Upper lobe of right lung (tissue), 1 donor: ENCODE measurements at regions of chr3 and their contacts with region 1.

Region 1: GRCh38 chr3:185983495-185984141 is 45.8 kb upstream of the TRA2B start:
- DNase-seq: peak; percentile 71
- ATAC-seq: peak; percentile 97
- H3K4me3 ChIP-seq: no peak overlapping the region
- H3K27ac ChIP-seq: no peak overlapping the region
- H3K4me1 ChIP-seq: peaks cover 4% of the 10 kb centered on the region
- H3K27me3 ChIP-seq: peaks cover 5% of the 10 kb centered on the region
- CTCF ChIP-seq: peak; percentile 94

Region 2: DNA sequence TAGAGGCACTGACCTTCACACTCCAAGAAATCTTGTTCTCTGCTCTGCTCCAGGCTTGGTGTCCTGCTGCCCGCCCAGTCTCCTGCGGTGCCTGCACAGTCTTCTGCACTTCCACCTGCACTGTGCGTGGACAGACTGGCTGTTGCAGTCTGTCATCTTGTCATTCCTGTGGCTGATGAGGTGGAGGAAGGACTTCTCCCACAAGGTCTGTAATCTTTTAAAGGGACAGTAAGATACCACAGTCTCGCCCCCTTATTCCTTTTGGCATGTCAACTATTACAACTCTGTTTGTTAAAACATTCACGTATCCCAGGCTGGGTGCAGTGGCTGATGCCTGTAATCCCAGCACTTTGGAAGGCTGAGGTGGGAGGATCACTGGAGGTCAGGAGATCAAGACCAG is 104.7 kb before region 1 on chr3:
- intact Hi-C with region 1: no loop called
- DNase-seq: no peak
- ATAC-seq: no peak
- H3K4me3 ChIP-seq: no peak overlapping the region
- H3K27ac ChIP-seq: no peak overlapping the region
- H3K4me1 ChIP-seq: no peaks in the 10 kb centered on the region
- H3K27me3 ChIP-seq: no peaks in the 10 kb centered on the region
- CTCF ChIP-seq: no peak

Region 3: GRCh38 chr3:186241910-186242821 is 258.5 kb after region 1 on chr3:
- intact Hi-C with region 1: loop called (anchors 10 kb)
- DNase-seq: peak; percentile 88
- ATAC-seq: peak; percentile 95
- H3K4me3 ChIP-seq: peak overlapping the region; percentile 42
- H3K27ac ChIP-seq: peak overlapping the region; percentile 17
- H3K4me1 ChIP-seq: peaks cover 14% of the 10 kb centered on the region
- H3K27me3 ChIP-seq: no peaks in the 10 kb centered on the region
- CTCF ChIP-seq: peak; percentile 58

Region 4: DNA sequence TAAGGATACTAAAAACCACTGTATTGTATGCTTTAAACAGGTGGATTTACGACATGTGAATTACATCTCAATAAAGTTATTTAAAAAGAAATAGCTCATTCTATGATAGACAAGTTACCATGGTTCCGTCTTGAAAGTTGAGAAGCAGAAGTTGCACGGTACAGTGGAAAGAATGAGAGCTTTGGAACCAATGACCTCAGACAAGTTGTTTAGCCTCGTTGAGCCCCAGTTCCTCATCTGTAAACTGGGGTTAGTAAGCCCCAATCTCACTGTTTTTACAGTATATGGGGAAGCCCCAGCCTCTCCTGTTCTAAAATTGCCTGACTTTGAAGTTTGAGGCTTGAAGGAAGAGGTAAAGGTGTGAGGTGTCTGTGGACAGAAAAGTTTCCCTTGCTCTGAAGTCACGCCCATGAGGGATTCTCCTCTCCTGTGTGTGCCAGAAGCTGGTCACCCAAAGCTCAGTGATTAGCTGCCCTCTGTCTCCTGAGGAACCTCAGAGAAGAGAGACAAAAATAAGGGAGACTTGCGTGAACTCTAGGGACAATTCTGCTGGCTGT is 550.6 kb after region 1 on chr3:
- intact Hi-C with region 1: loop called (anchors 10 kb)
- DNase-seq: no peak
- ATAC-seq: peak; percentile 79
- H3K4me3 ChIP-seq: no peak overlapping the region
- H3K27ac ChIP-seq: no peak overlapping the region
- H3K4me1 ChIP-seq: no peaks in the 10 kb centered on the region
- H3K27me3 ChIP-seq: no peaks in the 10 kb centered on the region
- CTCF ChIP-seq: no peak